Thyroid gland (tissue), 4 donors: ENCODE measurements at regions of chr17 and their contacts with region 1.

Region 1: DNA sequence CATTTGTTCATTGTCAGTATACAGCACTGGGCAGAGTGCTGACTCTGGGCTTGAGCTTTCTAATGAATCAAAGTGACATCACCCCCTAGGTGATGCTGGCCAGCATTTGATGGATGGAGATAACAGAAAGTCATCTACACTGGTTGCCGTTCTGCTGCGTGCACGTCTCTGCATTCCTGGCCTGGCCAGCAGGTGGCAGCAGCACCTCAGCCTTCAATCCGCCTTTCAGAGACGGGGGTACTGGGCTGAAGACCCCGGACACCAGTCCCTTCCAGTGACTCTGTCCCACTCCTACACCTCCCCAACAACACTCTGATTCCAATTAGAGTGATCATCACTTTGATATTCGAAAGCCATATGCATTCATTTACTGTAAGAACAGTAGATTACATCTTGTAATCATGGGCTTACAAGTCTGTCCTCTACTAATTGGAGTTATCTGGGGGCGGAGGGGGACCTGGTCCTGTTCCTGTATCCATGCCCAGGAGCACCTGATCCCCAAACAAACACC is 6.0 kb downstream of the CPSF4L start:
- DNase-seq: peak; percentile 38 to 47
- H3K4me3 ChIP-seq: no peak overlapping the region
- H3K27ac ChIP-seq: no peak overlapping the region
- H3K4me1 ChIP-seq: peaks cover 0 to 5% of the 10 kb centered on the region in 2 donors
- H3K27me3 ChIP-seq: no peaks in the 10 kb centered on the region
- CTCF ChIP-seq: peak; percentile 88 to 99 (median 96)
- POLR2A ChIP-seq: no peak

Region 2: DNA sequence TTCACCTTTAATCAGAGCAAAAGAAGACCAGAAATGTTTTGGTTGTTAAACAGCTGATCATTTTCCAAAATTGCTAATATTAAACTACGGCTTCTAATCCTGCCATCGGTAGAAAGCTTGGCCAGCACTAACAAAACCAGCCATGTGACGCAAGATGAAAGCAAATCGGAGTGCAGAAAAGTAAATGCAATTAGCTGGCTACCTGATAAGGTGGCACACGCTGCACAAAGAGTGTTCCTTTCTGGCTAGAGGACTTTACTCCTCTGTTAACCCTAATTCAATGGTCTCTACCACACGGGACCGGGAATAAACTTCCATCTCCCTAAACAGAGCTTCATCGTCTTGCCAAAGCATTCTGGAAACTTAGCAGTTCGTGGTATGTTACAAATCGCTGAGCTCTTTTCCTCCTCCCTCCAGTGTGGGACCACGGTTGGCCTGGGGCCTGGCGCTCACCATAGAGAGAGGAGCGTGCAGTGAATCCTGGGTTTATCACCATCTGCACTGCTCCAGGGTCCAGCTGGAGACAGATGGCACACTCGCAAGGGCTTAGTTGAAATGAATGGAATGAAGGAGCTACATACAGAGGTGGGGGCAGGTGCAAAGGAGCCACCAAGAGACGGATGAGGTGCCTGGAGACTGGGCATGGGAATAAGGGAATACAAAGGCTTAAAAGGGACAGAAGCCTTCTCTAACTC is 73.0 kb before region 1 on chr17:
- intact Hi-C with region 1: no loop called
- DNase-seq: no peak
- H3K4me3 ChIP-seq: no peak overlapping the region
- H3K27ac ChIP-seq: no peak overlapping the region
- H3K4me1 ChIP-seq: no peaks in the 10 kb centered on the region
- H3K27me3 ChIP-seq: no peaks in the 10 kb centered on the region
- CTCF ChIP-seq: no peak
- POLR2A ChIP-seq: no peak

Region 3: DNA sequence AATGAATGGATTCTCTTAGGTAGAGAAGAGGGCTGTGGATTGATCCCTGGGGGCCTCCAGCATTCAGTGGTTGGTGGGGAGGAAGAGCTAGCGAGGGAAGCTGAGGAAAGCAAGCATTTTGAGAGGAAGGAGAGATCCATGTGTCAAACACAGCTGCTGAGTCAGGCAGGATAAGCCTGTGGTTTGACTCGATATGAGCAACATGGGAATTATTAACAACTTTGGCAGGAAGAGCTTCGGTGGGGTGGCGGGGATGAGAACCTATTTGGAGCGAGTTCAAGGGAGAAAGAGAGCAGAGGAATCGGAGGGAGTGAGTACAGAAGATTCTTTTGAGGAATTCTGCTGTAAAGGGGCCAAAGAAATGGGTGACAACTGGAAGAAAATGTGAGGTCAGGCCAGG is 115.6 kb after region 1 on chr17:
- intact Hi-C with region 1: loop called (anchors 2 kb)
- DNase-seq: no peak
- H3K4me3 ChIP-seq: no peak overlapping the region
- H3K27ac ChIP-seq: no peak overlapping the region
- H3K4me1 ChIP-seq: peaks cover 0 to 5% of the 10 kb centered on the region in 2 donors
- H3K27me3 ChIP-seq: no peaks in the 10 kb centered on the region
- CTCF ChIP-seq: no peak
- POLR2A ChIP-seq: no peak